ENCODE measurements at regions of chr1 and their contacts with region 1.

Region 1: DNA sequence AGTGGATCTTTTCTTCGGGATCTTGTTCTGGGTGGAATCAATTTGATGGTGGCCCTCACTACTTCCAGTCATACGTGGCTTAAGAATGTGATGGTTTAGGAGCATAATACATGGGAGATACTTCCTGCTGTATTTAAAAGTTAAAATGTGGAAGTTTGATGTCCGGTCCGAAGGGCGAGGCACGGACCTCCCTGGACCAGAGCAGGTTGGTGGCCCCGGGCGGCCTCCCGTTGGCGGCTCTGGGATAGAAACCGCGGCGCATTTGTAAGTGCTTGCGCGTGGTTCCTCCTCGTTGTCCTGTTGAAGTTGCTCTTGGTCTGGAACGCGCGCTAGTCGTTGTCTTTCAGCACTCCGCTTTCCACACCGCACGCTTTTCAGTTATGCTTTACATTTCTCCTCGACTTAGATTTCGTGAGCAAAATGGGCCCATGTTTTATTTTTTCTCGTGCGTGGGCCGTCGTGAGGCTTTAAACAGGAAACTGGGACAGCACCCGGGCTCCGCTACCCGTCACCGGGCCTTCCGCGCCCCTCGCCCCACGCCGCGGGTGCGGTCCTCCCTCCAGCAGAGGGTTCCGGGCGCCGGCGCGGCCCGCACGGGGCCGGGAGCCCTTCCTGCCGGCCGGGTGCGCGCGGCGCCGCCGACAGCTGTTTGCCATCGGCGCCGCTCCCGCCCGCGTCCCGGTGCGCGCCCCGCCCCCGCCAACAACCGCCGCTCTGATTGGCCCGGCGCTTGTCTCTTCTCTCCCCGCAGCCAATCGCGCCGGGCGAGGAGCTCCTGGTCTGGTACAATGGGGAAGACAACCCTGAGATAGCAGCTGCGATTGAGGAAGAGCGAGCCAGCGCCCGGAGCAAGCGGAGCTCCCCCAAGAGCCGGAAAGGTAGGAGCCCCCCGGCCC is 48.9 kb downstream of the PRDM2 start:
- DNase-seq: peak; percentile 91 to 98 (median 96)
- ATAC-seq: peak; percentile 88
- H3K4me3 ChIP-seq: peak overlapping the region; percentile 78
- H3K4me3 Mint-ChIP-seq: peak overlapping the region; percentile 93
- H3K27ac ChIP-seq: peak overlapping the region; percentile 81 to 90
- H3K27ac Mint-ChIP-seq: peak overlapping the region; percentile 95
- H3K4me1 ChIP-seq: peaks cover 24% of the 10 kb centered on the region
- H3K4me1 Mint-ChIP-seq: peaks cover 60% of the 10 kb centered on the region
- H3K27me3 ChIP-seq: no peaks in the 10 kb centered on the region
- H3K27me3 Mint-ChIP-seq: no peaks in the 10 kb centered on the region
- CTCF ChIP-seq: no peak

Region 2: DNA sequence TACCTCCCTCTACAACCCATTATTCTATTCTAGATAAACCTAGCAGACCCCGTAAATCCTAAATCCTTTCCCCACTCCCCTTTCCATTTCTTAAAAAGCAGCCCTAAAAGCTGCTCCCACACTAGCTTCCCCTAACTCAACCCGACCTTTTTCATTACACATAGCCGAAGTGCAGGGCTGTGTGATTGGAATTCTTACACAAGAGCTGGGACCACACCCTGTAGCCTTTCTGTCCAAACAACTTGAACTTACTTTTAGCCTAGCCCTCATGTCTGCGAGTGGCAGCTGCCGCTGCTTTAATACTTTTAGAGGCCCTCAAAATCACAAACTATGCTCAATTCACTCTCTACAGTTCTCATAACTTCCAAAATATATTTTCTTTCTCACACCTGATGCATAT is 184.8 kb before region 1 on chr1:
- CTCF ChIA-PET with region 1: no interaction called
- POLR2A ChIA-PET with region 1: no interaction called
- intact Hi-C with region 1: no loop called
- DNase-seq: no peak
- ATAC-seq: no peak
- H3K4me3 ChIP-seq: no peak overlapping the region
- H3K4me3 Mint-ChIP-seq: no peak overlapping the region
- H3K27ac ChIP-seq: no peak overlapping the region
- H3K27ac Mint-ChIP-seq: no peak overlapping the region
- H3K4me1 ChIP-seq: no peaks in the 10 kb centered on the region
- H3K4me1 Mint-ChIP-seq: no peaks in the 10 kb centered on the region
- H3K27me3 ChIP-seq: peaks cover 0 to 2% of the 10 kb centered on the region in 2 experiments
- H3K27me3 Mint-ChIP-seq: peaks cover 10% of the 10 kb centered on the region
- CTCF ChIP-seq: no peak

Region 3: DNA sequence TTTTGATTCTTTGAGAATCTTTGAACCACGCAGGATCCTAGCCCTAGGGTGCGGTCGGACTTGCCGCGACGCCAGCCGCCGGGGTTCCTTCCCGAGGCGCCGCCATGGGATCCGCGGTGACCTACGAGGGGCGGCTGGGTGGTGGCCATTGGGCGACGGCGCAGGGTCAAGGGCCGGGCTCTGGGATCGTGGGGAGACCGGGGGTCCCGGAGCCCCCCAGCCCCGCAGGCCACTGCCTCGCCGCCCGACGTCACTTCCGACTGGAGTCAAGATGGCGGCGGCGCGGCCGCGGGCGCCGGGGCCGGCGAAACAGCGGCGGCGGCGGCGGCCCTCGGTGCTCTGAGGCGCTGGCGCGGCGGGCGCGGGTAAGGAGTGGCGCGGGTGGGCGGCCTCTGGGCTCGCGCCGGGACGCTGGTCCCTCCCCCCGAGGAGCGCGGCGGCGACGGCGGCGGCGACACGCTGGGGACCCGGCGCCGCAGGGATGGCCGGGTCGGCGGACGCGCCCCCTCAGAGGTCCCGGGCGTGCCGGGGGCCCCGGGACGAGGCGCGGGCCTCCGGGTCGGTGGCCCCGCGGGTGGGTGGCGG is 48.8 kb before region 1 on chr1 and contains the start of gene PRDM2:
- CTCF ChIA-PET with region 1: interaction called, 4 read pairs
- POLR2A ChIA-PET with region 1: interaction called, 53 read pairs
- intact Hi-C with region 1: loop called (anchors 2 to 5 kb)
- DNase-seq: peak; percentile 28 to 86 (median 50)
- ATAC-seq: peak; percentile 40
- H3K4me3 ChIP-seq: peak within 1 kb of the TSS; percentile 87
- H3K4me3 Mint-ChIP-seq: peak within 1 kb of the TSS; percentile 93
- H3K27ac ChIP-seq: peak within 1 kb of the TSS; percentile 95 to 96
- H3K27ac Mint-ChIP-seq: peak within 1 kb of the TSS; percentile 95
- H3K4me1 ChIP-seq: peaks cover 27% of the 10 kb centered on the region
- H3K4me1 Mint-ChIP-seq: peaks cover 53% of the 10 kb centered on the region
- H3K27me3 ChIP-seq: no peaks in the 10 kb centered on the region
- H3K27me3 Mint-ChIP-seq: no peaks in the 10 kb centered on the region
- CTCF ChIP-seq: no peak
- total RNA-seq, gene PRDM2: 136 to 140 TPM

Region 4: GRCh38 chr1:13794231-13795187 is 45.7 kb after region 1 on chr1:
- CTCF ChIA-PET with region 1: interaction called, 4 read pairs
- POLR2A ChIA-PET with region 1: interaction called, 11 read pairs
- intact Hi-C with region 1: no loop called
- DNase-seq: no peak
- ATAC-seq: no peak
- H3K4me3 ChIP-seq: no peak overlapping the region
- H3K4me3 Mint-ChIP-seq: no peak overlapping the region
- H3K27ac ChIP-seq: no peak overlapping the region
- H3K27ac Mint-ChIP-seq: peak overlapping the region; percentile 27
- H3K4me1 ChIP-seq: peaks cover 14% of the 10 kb centered on the region
- H3K4me1 Mint-ChIP-seq: peaks cover 79% of the 10 kb centered on the region
- H3K27me3 ChIP-seq: no peaks in the 10 kb centered on the region
- H3K27me3 Mint-ChIP-seq: no peaks in the 10 kb centered on the region
- CTCF ChIP-seq: no peak

Measured in CD4-positive, alpha-beta T cell (primary cell).